ENCODE measurements at regions of chr19 and their contacts with region 1.

Region 1: DNA sequence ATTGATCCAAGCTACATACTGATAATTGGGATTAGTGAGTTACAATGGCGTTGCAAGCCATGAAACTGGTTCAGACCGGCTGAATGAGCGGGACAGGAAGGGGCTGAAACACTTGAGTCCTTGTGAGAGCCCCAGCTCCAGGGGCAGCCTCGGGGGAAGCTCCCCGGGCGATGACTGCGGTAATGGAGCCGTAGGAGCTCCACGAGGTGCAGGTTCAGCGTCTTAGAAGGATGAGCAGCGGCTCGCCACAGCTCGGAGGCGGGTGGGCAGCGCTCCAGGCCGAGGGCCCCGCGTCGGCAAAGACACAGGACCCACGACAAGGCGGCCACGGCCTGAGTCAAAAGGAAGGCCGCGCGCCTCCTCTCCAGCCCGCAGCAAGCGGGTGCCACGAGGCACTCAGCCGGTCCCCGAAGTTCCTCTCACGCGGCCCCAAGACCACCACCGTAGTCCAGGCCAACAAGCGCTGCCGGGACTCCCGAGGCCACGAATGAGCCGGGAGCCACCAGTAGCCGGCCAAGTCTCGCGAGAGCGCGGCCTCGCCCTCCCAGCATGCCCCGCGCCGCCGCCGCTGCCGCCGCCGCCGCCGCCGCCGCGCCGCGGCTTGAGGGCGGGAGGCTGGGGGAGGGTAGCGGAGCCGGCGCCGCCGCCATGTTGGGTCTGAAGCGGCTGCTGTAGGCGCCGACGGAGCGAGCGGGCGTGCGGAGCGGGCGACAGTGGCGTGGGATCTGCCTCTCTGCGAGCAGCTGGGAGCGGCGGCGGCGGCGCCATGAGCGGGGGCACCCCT is at the start of gene LSM14A:
- DNase-seq: peak; percentile 93
- H3K4me3 Mint-ChIP-seq: peak within 1 kb of the TSS; percentile 92
- H3K27ac Mint-ChIP-seq: peak within 1 kb of the TSS; percentile 98
- H3K4me1 Mint-ChIP-seq: peaks cover 39% of the 10 kb centered on the region
- H3K27me3 Mint-ChIP-seq: no peaks in the 10 kb centered on the region
- total RNA-seq, gene LSM14A: 120 to 129 TPM

Region 2: GRCh38 chr19:33795370-33796163 is 376.5 kb before region 1 on chr19:
- CTCF ChIA-PET with region 1: interaction called, 3 read pairs
- POLR2A ChIA-PET with region 1: interaction called, 10 read pairs
- DNase-seq: peak; percentile 64
- H3K4me3 Mint-ChIP-seq: peak overlapping the region; percentile 71
- H3K27ac Mint-ChIP-seq: peak overlapping the region; percentile 63
- H3K4me1 Mint-ChIP-seq: peaks cover 17% of the 10 kb centered on the region
- H3K27me3 Mint-ChIP-seq: peaks cover 28% of the 10 kb centered on the region

Region 3: GRCh38 chr19:34155686-34156085 is 16.4 kb before region 1 on chr19:
- CTCF ChIA-PET with region 1: no interaction called
- POLR2A ChIA-PET with region 1: interaction called, 13 read pairs
- DNase-seq: no peak
- H3K4me3 Mint-ChIP-seq: no peak overlapping the region
- H3K27ac Mint-ChIP-seq: no peak overlapping the region
- H3K4me1 Mint-ChIP-seq: no peaks in the 10 kb centered on the region
- H3K27me3 Mint-ChIP-seq: no peaks in the 10 kb centered on the region

Region 4: DNA sequence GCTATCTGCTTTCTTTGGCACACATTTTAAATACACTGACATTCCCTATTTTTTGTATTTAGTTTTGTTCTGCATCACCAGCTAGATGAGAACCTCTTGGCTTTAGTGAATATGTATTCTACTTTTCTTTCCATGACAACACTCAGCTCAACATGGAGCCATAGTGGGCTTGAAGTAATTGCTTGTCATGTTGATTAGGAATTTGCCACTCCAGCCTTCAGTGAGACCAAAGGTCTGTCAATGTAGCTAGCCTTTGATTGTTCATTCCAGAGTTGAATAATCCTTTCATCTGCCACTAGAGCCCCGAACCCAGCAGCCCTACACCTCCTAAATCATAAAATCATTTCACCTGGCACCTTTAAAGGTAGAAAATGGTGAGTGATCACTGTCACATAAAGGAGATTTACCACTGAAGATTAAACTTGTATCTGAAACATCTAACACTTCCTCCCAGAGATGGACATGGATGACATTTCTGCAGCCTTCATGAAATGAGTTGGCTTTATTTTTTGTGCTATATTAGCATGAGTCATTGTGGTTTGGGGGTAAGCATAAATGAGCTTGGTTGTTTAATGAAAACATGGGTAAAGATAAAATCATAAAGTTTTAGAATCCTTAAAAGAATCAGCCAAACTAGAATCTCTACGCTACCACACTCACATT is 53.1 kb after region 1 on chr19:
- CTCF ChIA-PET with region 1: interaction called, 5 read pairs
- POLR2A ChIA-PET with region 1: interaction called, 29 read pairs
- DNase-seq: no peak
- H3K4me3 Mint-ChIP-seq: no peak overlapping the region
- H3K27ac Mint-ChIP-seq: peak overlapping the region; percentile 60
- H3K4me1 Mint-ChIP-seq: peaks cover 57% of the 10 kb centered on the region
- H3K27me3 Mint-ChIP-seq: no peaks in the 10 kb centered on the region

Region 5: DNA sequence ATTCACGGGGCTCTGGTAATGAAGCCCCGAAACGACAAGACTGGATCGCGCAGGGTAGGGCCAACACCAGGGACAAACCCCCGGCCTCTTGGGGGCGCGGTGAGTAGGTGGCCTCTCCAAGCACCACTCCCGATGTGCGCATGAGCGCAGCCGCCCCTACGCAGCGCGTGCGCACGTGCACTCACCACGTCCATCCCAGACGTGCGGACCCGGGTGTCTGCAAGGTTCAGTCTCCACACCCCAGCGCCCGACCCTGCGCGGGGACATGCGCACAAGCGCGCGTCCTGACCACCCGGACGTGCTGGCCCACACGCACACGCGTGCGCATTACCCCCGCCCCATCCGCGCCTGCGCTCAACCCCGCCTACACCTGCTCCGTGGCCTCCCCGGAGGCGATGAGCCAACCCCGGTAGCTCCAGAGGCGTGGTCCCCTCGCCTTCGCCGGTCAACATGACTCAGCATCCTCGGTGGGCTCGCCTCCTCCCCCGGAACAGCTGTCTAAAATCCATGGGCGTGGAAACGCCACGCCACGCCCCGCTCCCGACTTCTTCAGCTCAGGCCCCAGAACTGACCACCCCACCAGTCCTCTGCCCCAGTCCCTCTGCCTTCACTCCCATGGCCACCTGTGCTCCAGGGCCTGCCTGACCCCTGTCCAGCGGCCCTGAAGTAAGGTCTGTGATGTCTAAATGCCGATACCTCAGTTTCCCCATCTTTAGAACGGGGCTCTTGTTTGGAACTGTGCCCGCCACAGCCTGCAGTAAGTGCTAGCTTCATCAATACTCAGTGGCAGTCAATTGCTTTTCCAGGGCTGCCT is 187.3 kb after region 1 on chr19:
- CTCF ChIA-PET with region 1: interaction called, 5 read pairs
- POLR2A ChIA-PET with region 1: interaction called, 19 read pairs
- DNase-seq: peak; percentile 98
- H3K4me3 Mint-ChIP-seq: peak overlapping the region; percentile 83
- H3K27ac Mint-ChIP-seq: peak overlapping the region; percentile 90
- H3K4me1 Mint-ChIP-seq: peaks cover 50% of the 10 kb centered on the region
- H3K27me3 Mint-ChIP-seq: no peaks in the 10 kb centered on the region

Region 6: GRCh38 chr19:34428549-34429285 is 256.6 kb after region 1 on chr19:
- CTCF ChIA-PET with region 1: interaction called, 3 read pairs
- POLR2A ChIA-PET with region 1: interaction called, 19 read pairs
- DNase-seq: peak; percentile 51
- H3K4me3 Mint-ChIP-seq: peak overlapping the region; percentile 97
- H3K27ac Mint-ChIP-seq: peak overlapping the region; percentile 90
- H3K4me1 Mint-ChIP-seq: peaks cover 35% of the 10 kb centered on the region
- H3K27me3 Mint-ChIP-seq: no peaks in the 10 kb centered on the region

Measured in activated CD4-positive, alpha-beta memory T cell treated with anti-CD3 and anti-CD28 coated beads, Interleukin-2, amount 10 ng/mL, durations not matched to agents 7 days and 5 days (primary cell).